ENCODE measurements at regions of chr7 and their contacts with region 1.

Region 1: DNA sequence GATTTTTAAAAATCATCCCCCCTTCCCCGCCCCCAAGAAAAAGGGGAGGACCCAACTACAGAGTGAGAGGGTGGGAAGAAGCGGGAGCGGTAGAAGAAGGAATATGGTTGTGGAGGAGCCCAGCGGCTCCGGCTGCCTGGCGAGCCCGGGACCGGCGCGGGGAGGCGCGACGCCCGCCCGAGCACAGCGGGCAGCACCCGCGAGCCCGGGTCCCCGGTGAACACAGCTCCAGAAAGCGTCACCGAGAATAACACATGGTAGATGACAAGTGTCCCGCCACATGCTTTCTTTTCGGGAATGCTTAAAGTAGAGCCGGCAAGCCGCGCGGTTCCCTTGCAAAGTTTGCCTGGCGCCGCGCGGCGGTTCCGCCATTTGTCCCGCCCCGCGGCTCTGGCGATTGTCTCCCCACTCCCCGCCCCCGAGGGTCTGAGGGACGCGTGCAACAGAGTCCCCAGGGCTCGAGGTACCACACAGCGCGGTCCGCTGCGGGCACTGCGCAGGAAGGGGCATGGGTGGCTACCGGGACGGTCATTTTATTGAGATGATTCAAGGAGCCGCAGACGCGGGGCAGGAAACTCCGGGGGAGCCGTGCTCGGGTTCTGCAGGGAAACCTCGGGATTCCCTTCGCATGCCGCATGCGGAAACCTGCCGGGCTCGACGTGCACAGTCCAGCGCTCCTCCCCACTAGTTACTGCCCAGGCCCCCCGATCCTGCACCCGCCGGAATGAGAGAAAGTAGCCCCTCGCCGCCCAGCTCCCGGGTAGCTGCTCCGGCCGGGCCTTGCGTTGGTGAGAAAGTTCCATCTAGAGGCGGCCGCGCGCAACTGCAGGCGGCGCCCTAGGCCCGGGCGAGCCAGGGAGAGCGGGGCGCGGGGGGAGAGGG is 781 bp upstream of the GRM8 start:
- DNase-seq: peak; percentile 34 to 87
- H3K4me3 ChIP-seq: peak overlapping the region; percentile 62 to 87 (median 77)
- H3K27ac ChIP-seq: no peak overlapping the region
- H3K4me1 ChIP-seq: peaks cover 0 to 8% (median 3%) of the 10 kb centered on the region in 4 experiments; a peak in 3 of 7 replicates
- H3K27me3 ChIP-seq: peaks cover 26 to 53% (median 46%) of the 10 kb centered on the region in 4 experiments
- CTCF ChIP-seq: peak; percentile 68 to 84 (median 79)
- EP300 ChIP-seq: no peak
- POLR2A ChIP-seq: peak; percentile 35 to 60
- RAD21 ChIP-seq: peak; percentile 76 to 88

Region 2: GRCh38 chr7:125845686-125846085 is 1407.8 kb before region 1 on chr7:
- CTCF ChIA-PET with region 1: no interaction called
- POLR2A ChIA-PET with region 1: no interaction called
- DNase-seq: no peak
- H3K4me3 ChIP-seq: no peak overlapping the region
- H3K27ac ChIP-seq: no peak overlapping the region
- H3K4me1 ChIP-seq: peaks cover 0 to 3% (median 0%) of the 10 kb centered on the region in 4 experiments; a peak in 1 of 7 replicates
- H3K27me3 ChIP-seq: no peaks in the 10 kb centered on the region
- CTCF ChIP-seq: no peak
- EP300 ChIP-seq: no peak
- POLR2A ChIP-seq: no peak
- RAD21 ChIP-seq: no peak

Region 3: GRCh38 chr7:127114742-127115265 is 138.7 kb before region 1 on chr7:
- CTCF ChIA-PET with region 1: no interaction called
- POLR2A ChIA-PET with region 1: no interaction called
- DNase-seq: no peak
- H3K4me3 ChIP-seq: no peak overlapping the region
- H3K27ac ChIP-seq: no peak overlapping the region
- H3K4me1 ChIP-seq: peaks cover 0 to 4% (median 0%) of the 10 kb centered on the region in 4 experiments; a peak in 1 of 7 replicates
- H3K27me3 ChIP-seq: no peaks in the 10 kb centered on the region
- CTCF ChIP-seq: no peak
- EP300 ChIP-seq: no peak
- POLR2A ChIP-seq: no peak
- RAD21 ChIP-seq: no peak

Region 4: GRCh38 chr7:127158659-127159058 is 94.9 kb before region 1 on chr7:
- CTCF ChIA-PET with region 1: interaction called, 11 read pairs
- POLR2A ChIA-PET with region 1: no interaction called
- DNase-seq: no peak
- H3K4me3 ChIP-seq: no peak overlapping the region
- H3K27ac ChIP-seq: no peak overlapping the region
- H3K4me1 ChIP-seq: no peaks in the 10 kb centered on the region
- H3K27me3 ChIP-seq: peaks cover 0 to 1% (median 0%) of the 10 kb centered on the region in 4 experiments; a peak in 1 of 7 replicates
- CTCF ChIP-seq: peak in 2 of 3 experiments; percentile 46 to 72; a peak in 3 of 4 replicates
- EP300 ChIP-seq: no peak
- POLR2A ChIP-seq: no peak
- RAD21 ChIP-seq: peak; percentile 35 to 49

Region 5: DNA sequence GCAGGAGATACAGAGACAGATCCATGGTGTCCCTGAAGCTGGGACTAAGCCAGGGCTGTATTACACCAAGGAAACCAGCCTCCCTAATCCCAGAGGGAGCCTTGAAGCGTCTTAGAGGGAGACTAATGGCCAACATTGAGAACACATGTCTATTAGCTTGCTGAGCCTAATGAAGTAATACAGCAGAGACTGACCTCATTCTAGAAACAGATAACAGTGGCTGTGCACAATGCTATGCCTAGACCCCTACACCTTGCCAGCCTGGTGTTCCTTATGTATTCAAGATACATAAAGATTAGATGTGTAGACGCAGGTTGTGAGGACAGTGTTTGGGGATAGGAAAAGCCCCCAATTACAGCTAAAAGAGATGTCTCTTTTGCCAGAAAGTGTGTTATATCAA is 19.9 kb before region 1 on chr7:
- CTCF ChIA-PET with region 1: interaction called, 21 read pairs
- POLR2A ChIA-PET with region 1: interaction called, 3 read pairs
- DNase-seq: no peak
- H3K4me3 ChIP-seq: no peak overlapping the region
- H3K27ac ChIP-seq: no peak overlapping the region
- H3K4me1 ChIP-seq: no peaks in the 10 kb centered on the region
- H3K27me3 ChIP-seq: no peaks in the 10 kb centered on the region
- CTCF ChIP-seq: no peak
- EP300 ChIP-seq: no peak
- POLR2A ChIP-seq: no peak
- RAD21 ChIP-seq: no peak

Region 6: GRCh38 chr7:127264219-127264618 is 10.7 kb after region 1 on chr7:
- CTCF ChIA-PET with region 1: interaction called, 12 read pairs
- POLR2A ChIA-PET with region 1: no interaction called
- DNase-seq: no peak
- H3K4me3 ChIP-seq: no peak overlapping the region
- H3K27ac ChIP-seq: no peak overlapping the region
- H3K4me1 ChIP-seq: no peaks in the 10 kb centered on the region
- H3K27me3 ChIP-seq: no peaks in the 10 kb centered on the region; a peak in 1 of 7 replicates
- CTCF ChIP-seq: no peak
- EP300 ChIP-seq: no peak
- POLR2A ChIP-seq: no peak
- RAD21 ChIP-seq: no peak

Region 7: GRCh38 chr7:127330070-127330469 is 76.5 kb after region 1 on chr7:
- CTCF ChIA-PET with region 1: no interaction called
- POLR2A ChIA-PET with region 1: no interaction called
- DNase-seq: no peak
- H3K4me3 ChIP-seq: no peak overlapping the region
- H3K27ac ChIP-seq: no peak overlapping the region
- H3K4me1 ChIP-seq: no peaks in the 10 kb centered on the region
- H3K27me3 ChIP-seq: no peaks in the 10 kb centered on the region
- CTCF ChIP-seq: no peak
- EP300 ChIP-seq: no peak
- POLR2A ChIP-seq: no peak
- RAD21 ChIP-seq: no peak

Region 8: DNA sequence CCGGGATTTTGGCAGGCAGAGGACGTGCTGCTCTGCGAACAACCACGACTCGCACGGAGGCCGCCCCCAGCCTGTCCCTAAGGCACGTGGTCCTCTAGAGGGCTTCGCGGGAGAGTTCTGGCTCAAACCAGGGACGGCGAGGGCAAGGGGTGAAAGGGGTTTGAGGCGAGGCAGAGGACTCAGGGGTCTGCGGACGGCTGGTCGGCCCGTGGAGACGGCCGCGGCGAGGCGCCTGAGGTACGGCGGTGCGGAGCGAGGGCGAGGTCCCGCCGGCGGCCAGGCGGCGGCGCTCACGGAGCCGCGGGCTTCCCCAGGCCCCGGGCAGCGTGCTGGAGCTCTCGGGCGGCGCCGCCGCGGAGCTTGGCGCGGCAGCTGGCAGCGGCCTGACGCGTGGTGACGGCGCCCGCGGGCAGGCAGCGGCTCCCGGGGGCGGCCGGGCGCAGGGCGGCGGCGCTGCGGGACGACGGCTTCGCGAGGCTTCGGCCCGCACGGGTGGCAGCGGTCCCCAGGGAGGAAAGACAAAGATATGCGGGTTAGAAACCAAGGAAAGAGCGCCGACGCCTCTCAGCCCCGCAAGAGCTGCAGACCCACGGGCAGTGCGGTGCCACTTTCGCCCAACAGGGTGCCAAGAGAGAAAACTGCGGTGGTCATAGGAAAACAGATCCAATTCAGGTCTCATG is 94.2 kb after region 1 on chr7:
- CTCF ChIA-PET with region 1: interaction called, 10 read pairs
- POLR2A ChIA-PET with region 1: no interaction called
- DNase-seq: peak; percentile 50 to 84
- H3K4me3 ChIP-seq: peak overlapping the region; percentile 5 to 54 (median 39); a peak in 7 of 8 replicates
- H3K27ac ChIP-seq: no peak overlapping the region
- H3K4me1 ChIP-seq: peaks cover 0 to 2% (median under 1%) of the 10 kb centered on the region in 4 experiments; a peak in 1 of 7 replicates
- H3K27me3 ChIP-seq: peaks cover 7 to 26% (median 16%) of the 10 kb centered on the region in 4 experiments
- CTCF ChIP-seq: peak; percentile 73 to 96 (median 79)
- EP300 ChIP-seq: no peak
- POLR2A ChIP-seq: no peak
- RAD21 ChIP-seq: peak; percentile 31 to 71

Measured in H1 (cell line).